Dorsolateral prefrontal cortex (tissue), 120 donors: ENCODE measurements at regions of chr2 and their contacts with region 1.

Region 1: DNA sequence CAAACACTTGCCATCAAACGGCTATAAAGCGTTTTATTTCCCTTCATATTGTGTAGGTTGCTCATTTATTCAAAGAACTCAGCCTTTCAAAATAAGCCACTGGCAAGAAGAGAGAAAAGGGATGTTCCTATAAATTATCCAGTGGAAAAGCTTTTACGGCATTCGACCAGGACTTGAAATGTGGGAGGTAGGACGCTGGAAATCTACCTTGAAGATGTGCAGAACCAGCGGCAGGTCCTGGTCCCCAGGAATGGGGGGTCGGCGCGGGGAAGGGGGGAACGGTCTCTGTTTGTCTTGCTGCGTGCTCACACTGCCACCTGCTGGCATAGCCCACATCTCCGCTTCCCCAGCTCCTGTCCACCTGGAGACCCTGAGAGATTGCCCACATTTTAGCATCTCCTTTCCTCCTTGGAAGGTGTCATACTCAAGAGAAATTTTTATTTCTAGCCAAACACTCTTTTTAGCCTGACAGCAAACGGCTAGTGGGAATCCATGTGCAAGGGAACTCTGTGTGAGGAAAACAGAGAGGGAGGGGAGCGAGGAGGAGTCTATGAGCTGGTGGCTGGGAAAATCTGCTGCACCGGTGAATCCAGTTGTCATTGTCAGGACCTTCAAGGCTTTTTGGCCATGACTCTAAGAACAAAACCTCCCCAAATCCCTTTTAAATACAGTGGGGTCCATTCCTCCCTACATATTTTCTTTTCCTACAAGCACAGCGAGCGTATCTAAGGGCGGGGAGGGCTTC is 349.0 kb upstream of the PKDCC start:
- DNase-seq: peak; percentile 15 to 69 (median 58)
- H3K4me3 ChIP-seq: peak overlapping the region in 48 of 59 donors; percentile 1 to 54 (median 26)
- H3K27ac ChIP-seq: peak overlapping the region in 31 of 59 donors; percentile 6 to 76 (median 41)
- H3K27me3 ChIP-seq: peaks cover 0 to 8% (median 0%) of the 10 kb centered on the region in 45 donors
- CTCF ChIP-seq: peak; percentile 45 to 89 (median 76)

Region 2: DNA sequence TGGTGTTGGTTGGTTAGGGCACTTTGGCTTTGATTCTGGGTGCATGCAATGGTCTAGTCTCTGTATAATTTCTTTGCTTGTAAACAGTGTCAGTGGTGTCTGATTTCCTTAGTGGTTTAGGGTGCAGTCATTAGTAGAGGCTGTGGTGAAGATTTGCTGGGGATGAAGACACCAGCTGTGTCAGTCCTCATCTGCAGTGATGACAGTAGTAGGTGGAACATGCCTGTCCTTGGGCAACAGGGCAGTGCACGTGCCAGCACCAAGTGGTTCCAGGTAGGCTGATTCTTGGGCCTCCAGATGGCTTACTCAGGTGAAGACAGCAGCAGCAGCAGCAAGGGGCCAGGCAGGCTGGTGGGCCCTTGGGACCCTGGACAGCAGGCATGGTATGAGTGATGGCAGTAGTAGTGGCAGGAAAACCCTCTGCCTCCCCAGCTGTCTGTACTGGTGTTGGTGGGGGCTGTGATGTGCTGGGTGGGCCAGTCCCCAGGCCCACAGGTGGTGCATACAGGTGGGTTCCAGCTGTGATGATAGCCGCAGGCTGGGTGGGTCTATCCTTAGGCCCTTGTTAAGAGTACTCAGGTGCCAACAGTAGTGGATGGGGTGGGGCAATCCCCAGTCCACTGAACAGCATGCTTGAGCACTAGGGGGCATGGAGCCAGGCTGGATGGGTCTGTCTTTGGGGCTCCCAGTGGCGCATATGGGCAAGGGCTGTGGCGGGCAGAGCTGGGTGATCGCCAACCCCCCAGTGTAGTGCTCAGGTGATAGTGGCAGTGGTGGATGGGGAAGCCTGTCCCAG is 1779.1 kb before region 1 on chr2:
- intact Hi-C with region 1: loop called (anchors 5 kb)
- DNase-seq: no peak
- H3K4me3 ChIP-seq: no peak overlapping the region
- H3K27ac ChIP-seq: peak overlapping the region in 5 of 59 donors; percentile 8 to 44 (median 17)
- H3K27me3 ChIP-seq: no peaks in the 10 kb centered on the region
- CTCF ChIP-seq: no peak